Mammary epithelial cell (primary cell): ENCODE measurements at regions of chr11 and their contacts with region 1.

Region 1: DNA sequence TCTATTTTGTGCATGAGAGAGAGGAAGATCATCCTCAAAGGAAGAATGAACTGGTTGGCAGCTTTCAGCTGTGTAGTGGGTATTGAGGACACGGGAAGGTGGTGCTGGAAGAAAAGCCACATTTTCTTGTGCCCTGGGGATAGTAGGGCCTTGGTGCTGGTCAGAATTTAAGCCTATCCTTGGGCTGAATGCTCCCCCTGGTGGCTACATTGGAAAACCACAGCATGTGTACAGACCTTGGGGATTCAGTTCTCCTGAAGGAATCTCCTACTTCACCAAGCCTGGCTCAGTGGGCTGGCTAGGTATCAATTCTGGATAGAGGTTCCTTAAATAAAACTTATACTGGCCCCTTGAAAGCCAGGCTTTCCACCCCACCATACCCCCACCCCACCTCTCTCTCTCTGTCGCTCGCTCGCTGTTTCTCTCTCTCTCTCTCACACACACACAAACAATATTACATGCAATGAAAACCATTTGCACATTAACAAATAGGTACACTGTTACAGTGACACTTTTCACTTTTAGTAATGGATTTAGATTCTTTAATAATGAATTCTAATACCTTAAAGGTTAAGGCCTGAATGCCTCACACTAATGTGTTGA is 2.8 kb upstream of the OR51M1 start:
- DNase-seq: peak; percentile 35
- H3K4me3 ChIP-seq: no peak overlapping the region
- H3K27ac ChIP-seq: no peak overlapping the region
- H3K4me1 ChIP-seq: no peaks in the 10 kb centered on the region
- H3K27me3 ChIP-seq: no peaks in the 10 kb centered on the region
- CTCF ChIP-seq: peak; percentile 78 to 88

Region 2: GRCh38 chr11:5123802-5124521 is 256.9 kb before region 1 on chr11:
- CTCF ChIA-PET with region 1: no interaction called
- dilution Hi-C with region 1: no loop called
- in situ Hi-C with region 1: loop called in 1 of 2 experiments (anchors 10 kb)
- intact Hi-C with region 1: loop called (anchors 1 kb)
- DNase-seq: peak; percentile 51
- H3K4me3 ChIP-seq: no peak overlapping the region
- H3K27ac ChIP-seq: no peak overlapping the region
- H3K4me1 ChIP-seq: no peaks in the 10 kb centered on the region
- H3K27me3 ChIP-seq: no peaks in the 10 kb centered on the region
- CTCF ChIP-seq: peak; percentile 76 to 88

Region 3: GRCh38 chr11:5204787-5205186 is 176.1 kb before region 1 on chr11:
- CTCF ChIA-PET with region 1: no interaction called
- dilution Hi-C with region 1: no loop called
- in situ Hi-C with region 1: no loop called
- intact Hi-C with region 1: loop called (anchors 1 kb)
- DNase-seq: peak; percentile 58
- H3K4me3 ChIP-seq: no peak overlapping the region
- H3K27ac ChIP-seq: no peak overlapping the region
- H3K4me1 ChIP-seq: no peaks in the 10 kb centered on the region
- H3K27me3 ChIP-seq: no peaks in the 10 kb centered on the region
- CTCF ChIP-seq: peak; percentile 66 to 67